T-cell (primary cell): ENCODE measurements at regions of chr3 and their contacts with region 1.

Region 1: DNA sequence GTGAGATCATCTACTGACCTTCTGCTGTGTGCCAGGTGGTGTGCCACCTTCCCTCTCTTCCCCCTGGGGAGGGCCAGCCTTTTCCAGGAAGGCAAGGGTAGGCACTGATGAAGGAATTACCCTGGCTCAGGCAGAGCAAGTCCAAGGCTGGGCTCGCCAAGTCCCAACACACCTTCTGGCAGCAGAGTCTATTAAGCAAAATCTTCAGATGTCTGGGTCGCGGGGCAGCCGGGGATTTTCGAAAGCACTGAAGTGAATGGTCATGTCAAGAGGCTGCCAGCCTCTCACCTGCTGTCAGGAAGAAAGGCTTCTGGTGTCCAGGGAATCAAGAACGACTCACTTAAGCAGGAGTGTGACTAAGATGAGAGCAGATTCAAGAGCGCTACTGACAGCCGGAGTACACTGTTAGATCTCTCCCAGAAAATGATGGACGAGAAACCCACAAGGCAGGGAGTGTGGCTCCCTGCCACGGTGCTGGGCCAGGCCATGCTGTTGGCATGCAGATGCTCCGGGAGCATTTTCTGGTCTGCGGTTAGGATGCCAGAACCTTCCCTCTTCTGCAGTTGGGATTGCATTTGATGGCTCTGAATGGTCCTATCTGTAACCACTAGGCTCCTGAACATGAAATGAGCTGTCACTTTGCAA is 479.8 kb downstream of the SHQ1 start:
- DNase-seq: no peak
- ATAC-seq: no peak
- H3K4me3 ChIP-seq: no peak overlapping the region
- H3K4me3 Mint-ChIP-seq: no peak overlapping the region
- H3K27ac ChIP-seq: no peak overlapping the region
- H3K27ac Mint-ChIP-seq: no peak overlapping the region
- H3K4me1 ChIP-seq: peaks cover 5 to 9% of the 10 kb centered on the region in 2 experiments
- H3K4me1 Mint-ChIP-seq: peaks cover 13 to 17% (median 16%) of the 10 kb centered on the region in 3 donors
- H3K27me3 ChIP-seq: no peaks in the 10 kb centered on the region
- H3K27me3 Mint-ChIP-seq: no peaks in the 10 kb centered on the region

Region 2: DNA sequence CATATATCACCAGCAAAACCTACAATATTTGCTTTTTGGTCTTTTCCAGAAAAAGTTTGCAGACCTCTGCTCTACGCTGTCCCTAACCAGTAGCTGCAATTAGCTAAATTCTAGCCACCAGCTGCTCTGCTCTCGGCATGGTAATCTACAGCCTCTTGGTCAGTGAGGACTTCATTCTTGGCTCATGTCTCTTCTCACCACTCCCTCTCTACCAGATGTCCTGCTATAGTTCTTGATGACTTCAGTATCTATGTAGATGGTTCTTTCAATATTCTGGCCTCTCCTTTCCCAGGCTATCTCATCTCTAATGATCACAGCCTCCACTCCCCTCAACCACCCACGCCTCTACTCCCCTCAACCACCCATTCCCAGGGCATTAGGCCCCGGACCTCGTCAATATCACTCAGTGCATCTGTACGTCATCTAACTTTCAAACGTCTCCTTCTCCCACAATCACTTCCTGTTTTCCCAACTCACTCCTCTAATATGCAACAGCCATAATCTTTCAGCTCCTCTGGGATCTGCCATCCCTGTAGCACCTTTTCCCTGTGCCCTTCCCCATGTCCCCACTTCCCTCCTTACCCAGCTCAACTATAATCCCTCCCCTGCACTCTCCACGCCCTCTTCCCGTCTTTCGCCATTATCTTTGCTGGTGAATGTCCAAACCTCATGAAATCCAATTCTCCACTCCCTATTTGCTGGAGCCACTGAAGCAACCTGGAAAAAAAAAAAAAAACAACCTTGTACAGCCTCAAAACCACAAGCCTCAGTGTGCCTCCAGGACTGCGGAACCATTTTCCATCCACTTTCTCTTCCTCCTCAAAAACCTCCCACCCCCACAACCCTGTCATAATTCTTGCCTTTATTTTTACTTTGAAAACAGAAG is 154.1 kb before region 1 on chr3:
- CTCF ChIA-PET with region 1: interaction called in 1 of 2 experiments, 14 read pairs
- POLR2A ChIA-PET with region 1: no interaction called
- DNase-seq: no peak
- ATAC-seq: no peak
- H3K4me3 ChIP-seq: no peak overlapping the region
- H3K4me3 Mint-ChIP-seq: no peak overlapping the region
- H3K27ac ChIP-seq: no peak overlapping the region
- H3K27ac Mint-ChIP-seq: no peak overlapping the region
- H3K4me1 ChIP-seq: no peaks in the 10 kb centered on the region
- H3K4me1 Mint-ChIP-seq: no peaks in the 10 kb centered on the region
- H3K27me3 ChIP-seq: peaks cover 0 to 3% of the 10 kb centered on the region in 2 experiments
- H3K27me3 Mint-ChIP-seq: peaks cover 0 to 4% of the 10 kb centered on the region in 2 donors

Region 3: DNA sequence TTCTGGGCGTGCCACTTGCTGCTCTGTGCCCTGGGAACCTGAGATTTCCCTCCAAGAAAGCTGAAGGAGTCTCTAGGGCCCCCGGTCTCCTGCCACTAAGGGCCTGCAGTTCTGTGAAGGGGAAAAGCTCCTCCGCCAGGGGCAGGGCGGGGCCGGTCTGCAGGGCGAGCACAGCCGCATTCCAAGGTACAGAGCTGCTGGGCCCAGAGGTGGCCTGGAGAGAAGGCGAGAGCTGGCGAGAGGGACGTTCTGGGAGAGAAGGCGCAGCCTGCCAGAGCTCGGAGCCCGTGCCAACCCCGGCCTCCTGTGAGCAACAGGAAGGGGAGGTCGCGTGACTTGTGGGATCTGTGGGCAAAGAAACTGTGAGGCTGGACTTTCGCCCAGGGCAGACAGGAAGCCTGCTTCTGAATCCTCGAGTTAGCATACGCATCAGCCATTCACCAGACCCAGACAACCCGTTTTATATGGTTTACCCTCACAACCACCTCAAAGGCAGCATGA is 20.6 kb before region 1 on chr3:
- CTCF ChIA-PET with region 1: interaction called in 1 of 2 experiments, 12 read pairs
- POLR2A ChIA-PET with region 1: no interaction called
- DNase-seq: peak in 21 of 35 experiments; percentile 6 to 63 (median 34)
- ATAC-seq: peak; percentile 46 to 62 (median 49)
- H3K4me3 ChIP-seq: no peak overlapping the region
- H3K4me3 Mint-ChIP-seq: peak overlapping the region in 2 of 3 donors; percentile 19 to 55
- H3K27ac ChIP-seq: no peak overlapping the region
- H3K27ac Mint-ChIP-seq: peak overlapping the region; percentile 72 to 90
- H3K4me1 ChIP-seq: peaks cover 43 to 61% of the 10 kb centered on the region in 2 experiments
- H3K4me1 Mint-ChIP-seq: peaks cover 52 to 63% (median 63%) of the 10 kb centered on the region in 3 donors
- H3K27me3 ChIP-seq: peaks cover 0 to 11% of the 10 kb centered on the region in 2 experiments
- H3K27me3 Mint-ChIP-seq: peaks cover 0 to 7% of the 10 kb centered on the region in 2 donors

Region 4: DNA sequence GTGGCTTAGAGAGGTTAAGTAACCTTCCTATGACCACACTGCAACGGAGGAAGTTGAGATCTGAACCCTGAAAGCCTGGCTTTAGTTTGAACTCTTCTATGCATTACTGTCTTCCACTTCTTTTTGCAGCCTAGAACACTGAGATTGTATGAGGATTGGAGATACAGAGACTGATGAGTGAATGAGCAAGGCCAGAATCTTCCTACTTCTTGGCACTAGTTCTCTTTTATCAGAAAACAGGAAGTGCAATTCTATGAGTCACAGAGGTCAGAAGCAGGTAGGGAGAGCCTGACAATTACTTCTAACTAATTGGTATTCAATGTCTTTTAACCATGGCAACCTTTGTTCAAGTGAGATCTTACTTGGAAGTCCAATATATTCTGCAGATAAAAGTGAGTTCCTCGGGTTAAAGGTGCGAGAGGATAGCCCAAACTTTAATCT is 260.8 kb after region 1 on chr3:
- CTCF ChIA-PET with region 1: no interaction called
- POLR2A ChIA-PET with region 1: no interaction called
- DNase-seq: no peak
- ATAC-seq: peak in 3 of 4 experiments; percentile 57 to 85 (median 83)
- H3K4me3 ChIP-seq: no peak overlapping the region
- H3K4me3 Mint-ChIP-seq: no peak overlapping the region
- H3K27ac ChIP-seq: no peak overlapping the region
- H3K27ac Mint-ChIP-seq: peak overlapping the region; percentile 73 to 92
- H3K4me1 ChIP-seq: peaks cover 0 to 2% of the 10 kb centered on the region in 2 experiments
- H3K4me1 Mint-ChIP-seq: peaks cover 11 to 21% (median 19%) of the 10 kb centered on the region in 3 donors
- H3K27me3 ChIP-seq: no peaks in the 10 kb centered on the region
- H3K27me3 Mint-ChIP-seq: no peaks in the 10 kb centered on the region